Spleen (tissue), 13 donors: ENCODE measurements at regions of chr11 and their contacts with region 1.

Region 1: GRCh38 chr11:124415356-124415923 is 9.2 kb downstream of the OR8B4 start:
- DNase-seq: no peak
- H3K4me3 ChIP-seq: no peak overlapping the region
- H3K27ac ChIP-seq: no peak overlapping the region
- H3K4me1 ChIP-seq: no peaks in the 10 kb centered on the region
- H3K27me3 ChIP-seq: peaks cover 0 to 6% (median 0%) of the 10 kb centered on the region in 7 donors
- CTCF ChIP-seq: peak in 10 of 11 experiments; percentile 18 to 62 (median 48)
- POLR2A ChIP-seq: no peak

Region 2: GRCh38 chr11:124581817-124582216 is 166.4 kb after region 1 on chr11:
- intact Hi-C with region 1: loop called (anchors 5 kb)
- DNase-seq: no peak
- H3K4me3 ChIP-seq: no peak overlapping the region
- H3K27ac ChIP-seq: no peak overlapping the region
- H3K4me1 ChIP-seq: no peaks in the 10 kb centered on the region
- H3K27me3 ChIP-seq: peaks cover 0 to 1% (median 0%) of the 10 kb centered on the region in 7 donors
- CTCF ChIP-seq: no peak
- POLR2A ChIP-seq: no peak